ENCODE measurements at regions of chr16 and their contacts with region 1.

Region 1: DNA sequence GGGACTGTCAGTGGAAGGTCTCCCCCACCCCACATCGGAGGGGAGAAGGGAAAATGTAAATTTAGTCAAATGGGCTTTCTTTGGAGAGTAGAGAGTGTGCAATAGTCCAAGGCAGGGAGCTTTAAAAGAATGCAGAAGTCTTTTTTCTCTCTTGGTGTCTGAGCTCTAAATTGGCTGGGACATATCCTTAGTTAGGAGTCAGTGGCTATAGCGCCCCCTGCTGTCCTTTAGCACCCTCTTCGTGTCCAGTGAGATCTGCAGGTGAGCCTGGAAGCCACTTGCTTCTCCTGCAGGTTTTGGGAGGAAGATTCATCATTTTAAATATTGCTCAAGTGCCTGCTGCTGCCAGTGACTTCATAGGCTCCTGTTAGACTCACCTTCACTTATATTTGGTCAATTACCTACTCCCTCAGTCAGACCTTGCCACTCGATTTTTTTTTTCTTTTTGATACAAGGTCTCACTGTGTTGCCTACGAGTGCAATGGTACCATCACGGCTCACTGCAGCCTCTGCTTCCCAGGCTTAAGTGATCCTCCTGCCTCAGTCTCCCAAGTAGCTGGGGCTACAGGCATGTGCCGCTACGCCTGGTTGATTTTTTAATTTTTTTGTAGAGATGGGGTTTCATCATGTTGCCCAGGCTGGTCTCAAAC is 174.8 kb downstream of the PRKCB start:
- DNase-seq: peak; percentile 54 to 89 (median 85)
- ATAC-seq: no peak
- H3K4me3 ChIP-seq: no peak overlapping the region
- H3K4me3 Mint-ChIP-seq: no peak overlapping the region
- H3K27ac ChIP-seq: no peak overlapping the region
- H3K27ac Mint-ChIP-seq: peak overlapping the region; percentile 18
- H3K4me1 ChIP-seq: peaks cover 50% of the 10 kb centered on the region
- H3K4me1 Mint-ChIP-seq: peaks cover 66% of the 10 kb centered on the region
- H3K27me3 ChIP-seq: no peaks in the 10 kb centered on the region
- H3K27me3 Mint-ChIP-seq: no peaks in the 10 kb centered on the region
- CTCF ChIP-seq: peak; percentile 86

Region 2: GRCh38 chr16:23803591-23804123 is 206.9 kb before region 1 on chr16:
- CTCF ChIA-PET with region 1: interaction called, 335 read pairs
- POLR2A ChIA-PET with region 1: interaction called, 6 read pairs
- intact Hi-C with region 1: loop called (anchors 1 kb)
- DNase-seq: peak; percentile 39 to 83 (median 75)
- ATAC-seq: peak; percentile 92
- H3K4me3 ChIP-seq: no peak overlapping the region
- H3K4me3 Mint-ChIP-seq: no peak overlapping the region
- H3K27ac ChIP-seq: no peak overlapping the region
- H3K27ac Mint-ChIP-seq: no peak overlapping the region
- H3K4me1 ChIP-seq: peaks cover 4% of the 10 kb centered on the region
- H3K4me1 Mint-ChIP-seq: peaks cover 11% of the 10 kb centered on the region
- H3K27me3 ChIP-seq: no peaks in the 10 kb centered on the region
- H3K27me3 Mint-ChIP-seq: no peaks in the 10 kb centered on the region
- CTCF ChIP-seq: peak; percentile 77

Region 3: DNA sequence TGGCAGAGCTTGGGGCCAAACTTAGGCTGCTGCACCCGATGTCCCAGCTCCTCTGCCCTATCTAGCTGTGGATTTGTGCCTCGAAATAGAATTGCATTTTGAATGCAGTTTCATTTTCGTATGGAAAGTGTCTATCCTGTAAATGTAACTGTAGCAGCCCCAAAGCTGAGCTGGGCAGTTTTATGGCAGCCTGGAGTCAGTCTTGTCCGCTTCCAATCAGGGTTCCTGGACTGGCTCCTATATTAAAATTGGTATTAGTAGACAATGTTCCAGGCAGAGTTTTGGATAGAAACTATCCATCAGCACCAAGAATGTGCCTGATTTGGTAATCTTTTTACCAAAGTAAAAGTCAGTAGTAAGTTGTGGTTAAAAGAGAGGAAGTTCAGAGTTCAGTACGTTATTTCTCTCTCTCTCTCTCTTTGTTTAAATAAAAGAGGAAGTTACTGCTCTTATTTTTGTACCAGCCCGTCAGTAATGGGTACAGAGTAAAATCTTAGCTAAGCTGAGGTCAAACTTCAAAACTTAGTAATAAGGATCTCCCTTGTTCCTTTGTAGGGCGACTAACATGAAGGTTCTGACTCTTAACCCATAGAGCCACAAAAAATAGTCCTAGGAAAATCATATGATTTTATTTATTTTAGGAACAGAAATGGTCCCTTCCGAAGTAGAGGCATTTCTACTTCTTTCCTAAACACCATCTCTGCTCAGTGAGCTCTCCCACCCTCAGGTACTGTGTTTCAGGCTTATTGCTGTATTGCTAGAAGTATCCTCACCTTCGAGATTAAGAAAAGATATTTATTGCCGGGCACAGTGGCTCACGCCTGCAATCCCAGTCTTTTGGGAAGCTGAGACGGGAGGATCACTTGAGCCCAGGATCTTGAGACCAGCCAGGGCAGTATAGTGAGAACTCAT is 146.8 kb before region 1 on chr16:
- CTCF ChIA-PET with region 1: interaction called, 10 read pairs
- POLR2A ChIA-PET with region 1: interaction called, 5 read pairs
- intact Hi-C with region 1: no loop called
- DNase-seq: peak in 2 of 9 experiments; percentile 38 to 67
- ATAC-seq: peak; percentile 86
- H3K4me3 ChIP-seq: peak overlapping the region; percentile 46 to 56
- H3K4me3 Mint-ChIP-seq: peak overlapping the region; percentile 88
- H3K27ac ChIP-seq: peak overlapping the region; percentile 30 to 70
- H3K27ac Mint-ChIP-seq: peak overlapping the region; percentile 91
- H3K4me1 ChIP-seq: peaks cover 68% of the 10 kb centered on the region
- H3K4me1 Mint-ChIP-seq: peaks cover 86% of the 10 kb centered on the region
- H3K27me3 ChIP-seq: no peaks in the 10 kb centered on the region
- H3K27me3 Mint-ChIP-seq: no peaks in the 10 kb centered on the region
- CTCF ChIP-seq: no peak

Region 4: DNA sequence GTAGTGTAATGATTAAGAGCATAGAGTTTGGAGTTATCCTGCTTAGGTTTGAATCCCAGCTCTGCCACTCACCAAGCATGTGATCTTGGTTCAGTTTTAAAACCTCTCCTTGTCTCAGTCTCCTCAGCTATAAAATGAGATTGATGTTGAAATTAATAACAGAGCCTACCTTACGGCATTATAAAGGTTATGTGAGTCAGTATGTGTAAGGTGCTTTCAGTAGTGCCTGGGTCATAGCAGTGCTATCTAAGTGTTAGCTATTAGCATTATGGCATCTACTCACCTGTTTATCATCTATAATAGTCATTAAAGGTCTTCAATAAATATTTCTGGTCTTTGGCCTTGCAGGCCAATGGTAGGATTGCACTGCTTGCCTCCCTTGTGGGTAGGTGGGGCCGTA is 121.4 kb before region 1 on chr16:
- CTCF ChIA-PET with region 1: interaction called, 25 read pairs
- POLR2A ChIA-PET with region 1: no interaction called
- intact Hi-C with region 1: no loop called
- DNase-seq: no peak
- ATAC-seq: no peak
- H3K4me3 ChIP-seq: no peak overlapping the region
- H3K4me3 Mint-ChIP-seq: no peak overlapping the region
- H3K27ac ChIP-seq: no peak overlapping the region
- H3K27ac Mint-ChIP-seq: no peak overlapping the region
- H3K4me1 ChIP-seq: peaks cover 9% of the 10 kb centered on the region
- H3K4me1 Mint-ChIP-seq: peaks cover 74% of the 10 kb centered on the region
- H3K27me3 ChIP-seq: no peaks in the 10 kb centered on the region
- H3K27me3 Mint-ChIP-seq: no peaks in the 10 kb centered on the region
- CTCF ChIP-seq: no peak

Region 5: GRCh38 chr16:23959072-23959751 is 51.4 kb before region 1 on chr16:
- CTCF ChIA-PET with region 1: interaction called, 27 read pairs
- POLR2A ChIA-PET with region 1: interaction called, 3 read pairs
- intact Hi-C with region 1: loop called in 1 of 2 experiments (anchors 2 kb)
- DNase-seq: no peak
- ATAC-seq: no peak
- H3K4me3 ChIP-seq: no peak overlapping the region
- H3K4me3 Mint-ChIP-seq: peak overlapping the region; percentile 69
- H3K27ac ChIP-seq: no peak overlapping the region
- H3K27ac Mint-ChIP-seq: peak overlapping the region; percentile 88
- H3K4me1 ChIP-seq: peaks cover 45% of the 10 kb centered on the region
- H3K4me1 Mint-ChIP-seq: peaks cover 80% of the 10 kb centered on the region
- H3K27me3 ChIP-seq: no peaks in the 10 kb centered on the region
- H3K27me3 Mint-ChIP-seq: no peaks in the 10 kb centered on the region
- CTCF ChIP-seq: no peak

Region 6: GRCh38 chr16:23999663-24000062 is 10.9 kb before region 1 on chr16:
- CTCF ChIA-PET with region 1: interaction called, 24 read pairs
- POLR2A ChIA-PET with region 1: interaction called, 3 read pairs
- intact Hi-C with region 1: no loop called
- DNase-seq: peak in 1 of 9 experiments; percentile 25
- ATAC-seq: no peak
- H3K4me3 ChIP-seq: no peak overlapping the region
- H3K4me3 Mint-ChIP-seq: no peak overlapping the region
- H3K27ac ChIP-seq: no peak overlapping the region
- H3K27ac Mint-ChIP-seq: no peak overlapping the region
- H3K4me1 ChIP-seq: no peaks in the 10 kb centered on the region
- H3K4me1 Mint-ChIP-seq: peaks cover 25% of the 10 kb centered on the region
- H3K27me3 ChIP-seq: no peaks in the 10 kb centered on the region
- H3K27me3 Mint-ChIP-seq: no peaks in the 10 kb centered on the region
- CTCF ChIP-seq: no peak